Activated CD8-positive, alpha-beta T cell treated with anti-CD3 and anti-CD28 coated beads for 36 hours (primary cell): ENCODE measurements at regions of chr22 and their contacts with region 1.

Region 1: GRCh38 chr22:41541484-41541883 is 2.8 kb downstream of the POLR3H start:
- DNase-seq: no peak
- ATAC-seq: no peak
- H3K4me3 Mint-ChIP-seq: peak overlapping the region; percentile 7
- H3K27ac Mint-ChIP-seq: peak overlapping the region; percentile 68
- H3K4me1 Mint-ChIP-seq: peaks cover 34% of the 10 kb centered on the region
- H3K27me3 Mint-ChIP-seq: no peaks in the 10 kb centered on the region
- CTCF ChIP-seq: no peak

Region 2: DNA sequence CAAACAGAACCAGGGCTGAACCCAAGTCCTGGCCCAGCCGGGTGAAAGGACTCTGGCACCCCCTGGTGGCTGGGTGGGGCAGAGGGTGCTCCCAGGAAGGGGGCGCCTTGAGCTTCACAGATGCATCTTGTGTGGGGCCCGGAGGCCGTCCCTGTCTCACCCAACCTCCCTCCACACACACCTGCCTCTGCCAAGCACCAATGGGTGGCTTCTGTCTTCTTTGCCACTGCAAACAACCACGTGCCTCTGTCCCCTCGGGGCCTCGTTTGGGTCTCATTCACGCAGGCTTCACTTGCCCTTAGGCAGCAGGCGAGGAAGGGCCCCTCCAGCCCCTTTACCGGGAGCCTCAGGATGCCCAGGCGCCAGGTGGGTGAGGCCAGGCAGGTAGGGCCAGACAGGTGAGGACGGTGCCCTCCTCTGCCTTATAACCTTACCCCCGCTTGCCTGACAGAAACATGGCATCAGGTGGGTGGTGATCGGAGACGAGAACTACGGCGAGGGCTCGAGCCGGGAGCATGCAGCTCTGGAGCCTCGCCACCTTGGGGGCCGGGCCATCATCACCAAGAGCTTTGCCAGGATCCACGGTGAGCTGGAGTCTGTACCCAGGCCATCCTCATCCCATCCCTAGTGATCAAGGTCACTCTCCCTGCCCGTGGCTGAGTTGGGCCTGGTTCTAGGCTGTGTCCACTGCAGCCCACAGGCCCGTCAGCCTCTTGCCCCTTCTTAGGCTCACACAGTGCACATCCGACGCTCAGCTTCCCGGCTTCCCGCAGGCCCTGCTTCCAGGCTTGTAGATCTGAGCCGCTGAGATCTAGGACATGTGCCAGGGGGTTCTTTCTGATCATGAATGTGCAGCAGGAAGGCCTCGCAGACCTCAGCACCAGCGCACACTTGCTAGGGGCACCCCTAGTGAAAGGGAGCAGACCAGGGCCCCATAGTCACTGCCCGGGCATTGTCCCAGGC is 14.4 kb before region 1 on chr22:
- CTCF ChIA-PET with region 1: interaction called, 14 read pairs
- POLR2A ChIA-PET with region 1: interaction called, 7 read pairs
- intact Hi-C with region 1: no loop called
- DNase-seq: peak; percentile 70
- ATAC-seq: peak; percentile 74
- H3K4me3 Mint-ChIP-seq: no peak overlapping the region
- H3K27ac Mint-ChIP-seq: peak overlapping the region; percentile 71
- H3K4me1 Mint-ChIP-seq: peaks cover 16% of the 10 kb centered on the region
- H3K27me3 Mint-ChIP-seq: no peaks in the 10 kb centered on the region
- CTCF ChIP-seq: peak; percentile 78

Region 3: GRCh38 chr22:41700015-41700335 is 158.5 kb after region 1 on chr22:
- CTCF ChIA-PET with region 1: no interaction called
- POLR2A ChIA-PET with region 1: no interaction called
- intact Hi-C with region 1: no loop called
- DNase-seq: no peak
- ATAC-seq: no peak
- H3K4me3 Mint-ChIP-seq: no peak overlapping the region
- H3K27ac Mint-ChIP-seq: no peak overlapping the region
- H3K4me1 Mint-ChIP-seq: peaks cover 10% of the 10 kb centered on the region
- H3K27me3 Mint-ChIP-seq: no peaks in the 10 kb centered on the region
- CTCF ChIP-seq: no peak